Pancreas (tissue), 10 donors: ENCODE measurements at regions of chr3 and their contacts with region 1.

Region 1: DNA sequence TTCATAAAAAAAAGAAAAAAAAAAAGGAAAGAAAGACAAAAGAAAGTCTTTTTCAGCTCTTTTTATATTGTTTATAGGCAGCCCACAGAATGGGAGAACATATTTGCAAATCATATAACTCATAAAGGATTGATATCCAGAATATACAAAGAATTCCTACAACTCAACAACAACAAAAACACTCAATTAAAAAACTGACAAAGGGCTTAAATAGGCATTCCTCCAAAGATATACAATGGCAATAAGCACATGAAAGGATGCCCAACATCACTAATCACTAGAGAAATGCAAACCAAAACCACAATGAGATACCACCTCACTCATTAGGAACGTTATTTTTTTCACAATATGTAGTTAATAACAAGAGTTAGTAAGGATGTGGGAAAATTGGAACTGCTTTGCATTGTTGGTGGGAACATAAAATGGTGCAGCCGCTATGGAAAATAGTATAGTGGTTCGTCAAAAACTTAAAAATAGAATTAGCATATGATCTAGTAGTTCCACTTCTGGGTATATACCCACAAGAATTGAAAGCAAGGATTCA is 54.2 kb upstream of the CMTM8 start:
- DNase-seq: no peak
- ATAC-seq: no peak
- H3K4me3 ChIP-seq: no peak overlapping the region
- H3K27ac ChIP-seq: no peak overlapping the region
- H3K4me1 ChIP-seq: no peaks in the 10 kb centered on the region
- H3K27me3 ChIP-seq: no peaks in the 10 kb centered on the region
- CTCF ChIP-seq: no peak

Region 2: GRCh38 chr3:32340039-32340438 is 155.8 kb after region 1 on chr3:
- intact Hi-C with region 1: loop called in 1 of 3 experiments (anchors 10 kb)
- DNase-seq: peak in 1 of 6 donors; percentile 25
- ATAC-seq: peak; percentile 71 to 90 (median 84)
- H3K4me3 ChIP-seq: no peak overlapping the region
- H3K27ac ChIP-seq: no peak overlapping the region
- H3K4me1 ChIP-seq: peaks cover 0 to 7% (median 4%) of the 10 kb centered on the region in 3 donors
- H3K27me3 ChIP-seq: no peaks in the 10 kb centered on the region
- CTCF ChIP-seq: peak in 3 of 4 donors; percentile 10 to 26 (median 19)